ENCODE measurements at regions of chr2 and their contacts with region 1.

Region 1: DNA sequence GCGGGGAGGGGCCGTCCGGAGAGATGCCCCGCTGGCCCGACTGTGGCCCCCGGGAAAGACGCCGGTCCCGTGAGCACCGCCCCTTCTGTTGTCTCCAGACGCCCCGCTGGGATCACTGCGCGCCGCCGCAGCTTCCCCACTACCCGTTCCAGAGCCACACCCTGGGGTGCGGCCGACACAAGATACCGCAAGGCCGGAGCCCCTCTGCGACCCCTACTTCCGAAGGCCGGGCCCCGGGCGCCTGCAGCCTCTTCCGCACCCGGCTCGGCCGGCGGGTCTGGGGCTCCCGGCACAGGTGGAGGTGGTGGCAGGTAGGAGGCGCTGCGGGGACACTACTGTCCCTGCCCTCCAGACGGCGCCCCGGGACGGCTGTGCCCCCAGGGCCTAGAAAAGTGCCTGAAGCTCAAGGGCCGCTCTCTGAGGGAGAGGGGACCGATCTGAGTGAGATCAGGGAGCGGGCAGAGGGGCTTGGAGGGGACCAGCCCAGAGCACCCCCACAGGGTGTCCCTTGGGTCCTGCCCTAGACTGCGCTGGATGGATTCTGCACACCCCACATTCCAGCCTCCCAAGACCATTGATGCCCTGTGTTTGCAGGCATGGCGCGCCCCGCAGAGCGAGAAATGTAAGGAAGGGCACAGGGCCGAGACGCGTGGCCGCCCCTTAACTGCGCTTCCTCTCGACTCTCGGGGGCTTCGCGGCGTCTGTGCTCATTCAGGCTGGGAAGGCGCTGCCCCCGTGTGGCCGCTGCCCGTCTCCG is 80.0 kb downstream of the GFPT1 start:
- DNase-seq: peak; percentile 74 to 79 (median 77)
- ATAC-seq: peak; percentile 88 to 92 (median 88)
- H3K4me3 ChIP-seq: peak overlapping the region; percentile 37 to 46 (median 41)
- H3K27ac ChIP-seq: peak overlapping the region in 2 of 3 donors; percentile 11 to 51
- H3K4me1 ChIP-seq: peaks cover 0 to 12% (median 3%) of the 10 kb centered on the region in 4 donors
- H3K27me3 ChIP-seq: peaks cover 0 to 5% of the 10 kb centered on the region in 2 donors
- CTCF ChIP-seq: peak; percentile 71 to 79 (median 74)
- POLR2A ChIP-seq: no peak

Region 2: DNA sequence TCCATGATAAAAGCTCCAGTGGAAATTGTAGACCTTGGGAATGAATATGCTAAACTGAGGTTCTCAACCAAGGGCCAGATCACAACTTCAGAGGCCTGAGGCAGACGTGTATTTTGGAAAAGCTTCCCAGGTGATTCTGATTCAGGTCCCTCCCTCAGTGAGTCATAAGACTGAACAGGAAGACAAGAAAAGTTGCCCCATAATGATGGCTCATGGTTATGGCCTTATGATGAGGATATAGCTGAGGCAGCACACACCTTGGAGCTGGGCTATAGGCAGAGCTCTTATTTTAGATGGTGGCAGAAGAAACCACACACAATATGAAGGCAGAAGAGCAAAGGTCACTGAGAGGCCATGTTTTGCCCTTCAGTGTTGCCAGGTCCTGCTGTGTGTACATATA is 284.5 kb before region 1 on chr2:
- intact Hi-C with region 1: loop called in 1 of 2 experiments (anchors 5 kb)
- DNase-seq: no peak
- ATAC-seq: no peak
- H3K4me3 ChIP-seq: no peak overlapping the region
- H3K27ac ChIP-seq: no peak overlapping the region
- H3K4me1 ChIP-seq: no peaks in the 10 kb centered on the region
- H3K27me3 ChIP-seq: no peaks in the 10 kb centered on the region
- CTCF ChIP-seq: no peak
- POLR2A ChIP-seq: no peak